Endothelial cell of umbilical vein (primary cell): ENCODE measurements at regions of chr1 and their contacts with region 1.

Region 1: DNA sequence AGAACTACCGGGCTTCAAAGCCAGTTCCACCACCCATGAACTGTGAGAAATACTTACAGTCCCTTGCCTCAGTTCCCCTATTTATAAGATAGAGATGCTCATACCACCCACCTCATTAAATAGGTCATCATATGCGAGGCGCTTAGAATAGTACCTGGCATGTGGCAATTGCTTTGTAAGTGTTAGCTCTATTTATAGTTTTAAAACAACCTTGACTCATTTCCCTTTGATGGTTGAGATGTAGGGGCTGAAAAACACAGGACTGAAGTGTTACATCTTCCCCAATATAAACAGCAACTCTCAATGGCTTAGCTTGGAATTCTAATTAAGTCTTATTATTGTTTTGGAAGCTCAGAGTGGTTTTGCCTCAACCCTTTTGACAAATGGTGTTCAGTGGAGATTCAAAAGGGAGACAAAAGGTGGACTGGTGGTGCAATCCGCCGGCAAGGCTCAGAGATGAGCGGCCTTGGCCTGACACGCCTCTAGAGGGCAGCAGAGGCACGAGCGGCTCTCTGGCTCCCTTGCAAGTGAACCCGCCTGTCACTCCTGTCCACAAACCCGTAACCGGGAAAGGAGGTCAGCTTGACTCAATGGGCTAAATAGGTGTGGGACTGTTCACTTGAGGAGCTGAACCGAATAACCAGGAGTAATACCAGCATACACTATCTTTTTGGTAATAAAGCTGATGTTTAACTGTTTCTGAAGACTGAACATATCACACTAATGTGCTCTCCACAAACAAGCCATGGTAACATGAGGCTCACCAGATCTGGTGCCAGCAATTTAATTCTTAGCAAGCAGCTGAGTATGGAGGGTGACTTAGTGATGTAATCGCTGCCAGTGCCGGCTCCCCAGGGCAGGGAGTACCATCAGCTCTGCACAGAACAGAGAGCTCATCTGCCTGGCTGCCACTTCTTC is 19.5 kb upstream of the SMYD2 start:
- DNase-seq: peak; percentile 86
- H3K4me3 ChIP-seq: no peak overlapping the region
- H3K27ac ChIP-seq: no peak overlapping the region
- H3K4me1 ChIP-seq: peaks cover 24% of the 10 kb centered on the region
- H3K27me3 ChIP-seq: peaks cover 0 to 4% of the 10 kb centered on the region in 2 experiments
- CTCF ChIP-seq: peak; percentile 96 to 97
- POLR2A ChIP-seq: no peak

Region 2: DNA sequence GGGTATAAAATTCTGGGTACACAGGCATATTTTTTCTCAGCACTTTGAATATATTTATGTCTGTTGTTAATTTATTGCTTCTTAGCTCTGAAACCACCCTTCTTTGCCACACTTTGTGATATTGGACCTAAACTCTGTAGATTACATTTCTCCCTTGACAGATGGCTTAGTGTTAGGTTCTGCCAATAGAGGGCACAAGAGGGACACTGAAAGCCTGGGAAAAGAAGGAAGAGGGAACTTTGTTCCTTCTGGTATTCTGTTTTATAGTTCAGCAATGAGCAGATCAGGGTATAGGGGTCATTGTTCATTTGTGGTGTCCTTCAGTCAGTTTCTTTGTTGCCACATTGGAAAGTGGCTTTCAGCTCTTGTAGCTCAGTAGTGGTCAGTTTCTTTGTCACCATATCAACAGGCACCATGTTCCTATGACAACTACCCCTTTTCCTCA is 697.2 kb before region 1 on chr1:
- CTCF ChIA-PET with region 1: no interaction called
- POLR2A ChIA-PET with region 1: no interaction called
- dilution Hi-C with region 1: no loop called
- intact Hi-C with region 1: loop called (anchors 2 kb)
- DNase-seq: peak; percentile 51
- H3K4me3 ChIP-seq: no peak overlapping the region
- H3K27ac ChIP-seq: no peak overlapping the region
- H3K4me1 ChIP-seq: no peaks in the 10 kb centered on the region
- H3K27me3 ChIP-seq: no peaks in the 10 kb centered on the region
- CTCF ChIP-seq: peak; percentile 40 to 52
- POLR2A ChIP-seq: no peak

Region 3: DNA sequence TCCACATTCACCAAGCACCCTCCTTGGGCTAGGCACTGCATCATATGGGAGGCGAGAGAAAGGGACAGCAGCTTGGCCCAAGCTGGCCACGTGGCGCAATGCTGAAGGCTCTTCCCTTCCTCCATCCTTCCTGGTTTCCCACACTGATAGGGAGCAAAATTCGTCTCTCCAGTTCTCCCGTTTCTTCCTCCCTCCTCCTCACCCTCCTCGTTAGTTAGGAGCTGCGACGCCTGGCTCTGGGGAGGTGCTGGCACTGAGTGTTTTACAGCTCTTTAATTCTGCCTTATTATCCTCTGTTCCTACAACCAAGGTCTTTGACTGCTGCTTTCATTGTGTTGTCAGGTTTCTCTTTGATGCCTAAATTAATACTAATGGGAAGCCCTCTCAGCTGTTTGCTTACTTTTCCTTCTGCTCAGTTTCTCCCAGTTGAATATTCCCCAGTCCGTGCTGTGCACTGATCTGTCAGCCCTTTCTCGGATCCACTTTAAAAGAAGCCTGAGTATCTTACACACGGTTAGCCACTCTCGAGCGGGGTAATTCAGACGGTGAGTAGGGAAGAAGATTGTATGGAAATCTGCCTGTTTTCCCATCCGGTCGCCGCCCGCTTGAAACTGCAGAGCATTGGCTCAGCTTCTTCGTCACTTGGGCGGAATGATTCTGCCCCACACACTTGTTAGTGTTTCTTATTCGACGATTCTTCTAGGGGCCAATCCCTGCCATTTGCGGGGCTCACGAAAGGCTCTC is 36.7 kb before region 1 on chr1:
- CTCF ChIA-PET with region 1: interaction called, 13 read pairs
- POLR2A ChIA-PET with region 1: no interaction called
- dilution Hi-C with region 1: no loop called
- intact Hi-C with region 1: no loop called
- DNase-seq: peak; percentile 31
- H3K4me3 ChIP-seq: peak overlapping the region; percentile 25 to 73 (median 48)
- H3K27ac ChIP-seq: no peak overlapping the region
- H3K4me1 ChIP-seq: peaks cover 7% of the 10 kb centered on the region
- H3K27me3 ChIP-seq: peaks cover 2 to 6% of the 10 kb centered on the region in 2 experiments
- CTCF ChIP-seq: no peak
- POLR2A ChIP-seq: no peak

Region 4: GRCh38 chr1:214251354-214251753 is 10.1 kb before region 1 on chr1:
- CTCF ChIA-PET with region 1: interaction called, 20 read pairs
- POLR2A ChIA-PET with region 1: no interaction called
- dilution Hi-C with region 1: no loop called
- intact Hi-C with region 1: no loop called
- DNase-seq: no peak
- H3K4me3 ChIP-seq: no peak overlapping the region
- H3K27ac ChIP-seq: no peak overlapping the region
- H3K4me1 ChIP-seq: peaks cover 3% of the 10 kb centered on the region
- H3K27me3 ChIP-seq: no peaks in the 10 kb centered on the region
- CTCF ChIP-seq: no peak
- POLR2A ChIP-seq: no peak

Region 5: DNA sequence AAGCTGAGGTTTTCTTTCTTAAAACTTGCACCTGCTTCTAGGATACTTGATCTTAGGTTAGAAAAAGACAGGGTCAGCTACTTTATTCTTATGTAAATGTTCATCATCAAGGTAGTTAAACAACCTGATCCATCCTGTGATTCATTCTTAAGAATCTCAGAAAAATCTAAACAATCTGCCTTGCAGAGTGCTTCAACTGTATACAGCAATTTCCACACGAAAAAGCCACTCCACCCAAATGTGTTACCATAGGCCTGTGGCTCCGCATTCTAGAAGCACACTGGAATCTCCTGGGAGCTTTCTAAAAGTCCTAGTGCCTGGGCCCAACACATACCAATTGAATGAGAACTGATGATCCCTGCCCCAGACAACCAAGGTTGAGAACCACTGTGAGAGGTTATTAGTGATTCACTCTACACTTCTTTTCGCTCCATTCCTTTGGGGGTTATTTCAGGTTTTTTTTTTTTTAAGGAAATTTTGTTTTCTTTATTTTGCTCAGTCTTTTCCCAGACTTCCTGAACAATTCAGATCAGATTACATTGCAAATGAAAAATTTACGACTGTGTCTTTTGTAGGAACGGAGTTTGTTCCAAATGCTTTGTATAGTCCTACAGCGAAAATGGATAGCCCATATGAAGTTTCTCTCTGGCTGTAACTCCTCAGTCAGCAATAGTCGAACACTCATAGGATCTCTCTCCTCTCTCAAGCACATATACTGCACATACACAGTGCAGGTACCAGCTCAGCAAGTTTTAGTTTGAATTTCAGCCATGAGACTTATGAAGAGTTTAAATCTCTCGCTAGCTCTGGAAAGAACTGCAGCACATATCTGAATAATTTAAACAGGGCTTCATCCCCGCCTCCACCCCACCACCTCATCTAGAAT is 35.6 kb after region 1 on chr1:
- CTCF ChIA-PET with region 1: interaction called, 24 read pairs
- POLR2A ChIA-PET with region 1: no interaction called
- dilution Hi-C with region 1: no loop called
- intact Hi-C with region 1: no loop called
- DNase-seq: peak; percentile 30
- H3K4me3 ChIP-seq: no peak overlapping the region
- H3K27ac ChIP-seq: no peak overlapping the region
- H3K4me1 ChIP-seq: peaks cover 31% of the 10 kb centered on the region
- H3K27me3 ChIP-seq: no peaks in the 10 kb centered on the region
- CTCF ChIP-seq: no peak
- POLR2A ChIP-seq: no peak

Region 6: GRCh38 chr1:214316593-214316992 is 55.1 kb after region 1 on chr1:
- CTCF ChIA-PET with region 1: interaction called, 22 read pairs
- POLR2A ChIA-PET with region 1: no interaction called
- dilution Hi-C with region 1: no loop called
- intact Hi-C with region 1: no loop called
- DNase-seq: no peak
- H3K4me3 ChIP-seq: no peak overlapping the region
- H3K27ac ChIP-seq: no peak overlapping the region
- H3K4me1 ChIP-seq: no peaks in the 10 kb centered on the region
- H3K27me3 ChIP-seq: no peaks in the 10 kb centered on the region
- CTCF ChIP-seq: no peak
- POLR2A ChIP-seq: no peak

Region 7: GRCh38 chr1:214386747-214387146 is 125.3 kb after region 1 on chr1:
- CTCF ChIA-PET with region 1: no interaction called
- POLR2A ChIA-PET with region 1: no interaction called
- dilution Hi-C with region 1: no loop called
- intact Hi-C with region 1: no loop called
- DNase-seq: no peak
- H3K4me3 ChIP-seq: no peak overlapping the region
- H3K27ac ChIP-seq: no peak overlapping the region
- H3K4me1 ChIP-seq: no peaks in the 10 kb centered on the region
- H3K27me3 ChIP-seq: no peaks in the 10 kb centered on the region
- CTCF ChIP-seq: no peak
- POLR2A ChIP-seq: no peak